Thyroid gland (tissue), 4 donors: ENCODE measurements at regions of chr11 and their contacts with region 1.

Region 1: DNA sequence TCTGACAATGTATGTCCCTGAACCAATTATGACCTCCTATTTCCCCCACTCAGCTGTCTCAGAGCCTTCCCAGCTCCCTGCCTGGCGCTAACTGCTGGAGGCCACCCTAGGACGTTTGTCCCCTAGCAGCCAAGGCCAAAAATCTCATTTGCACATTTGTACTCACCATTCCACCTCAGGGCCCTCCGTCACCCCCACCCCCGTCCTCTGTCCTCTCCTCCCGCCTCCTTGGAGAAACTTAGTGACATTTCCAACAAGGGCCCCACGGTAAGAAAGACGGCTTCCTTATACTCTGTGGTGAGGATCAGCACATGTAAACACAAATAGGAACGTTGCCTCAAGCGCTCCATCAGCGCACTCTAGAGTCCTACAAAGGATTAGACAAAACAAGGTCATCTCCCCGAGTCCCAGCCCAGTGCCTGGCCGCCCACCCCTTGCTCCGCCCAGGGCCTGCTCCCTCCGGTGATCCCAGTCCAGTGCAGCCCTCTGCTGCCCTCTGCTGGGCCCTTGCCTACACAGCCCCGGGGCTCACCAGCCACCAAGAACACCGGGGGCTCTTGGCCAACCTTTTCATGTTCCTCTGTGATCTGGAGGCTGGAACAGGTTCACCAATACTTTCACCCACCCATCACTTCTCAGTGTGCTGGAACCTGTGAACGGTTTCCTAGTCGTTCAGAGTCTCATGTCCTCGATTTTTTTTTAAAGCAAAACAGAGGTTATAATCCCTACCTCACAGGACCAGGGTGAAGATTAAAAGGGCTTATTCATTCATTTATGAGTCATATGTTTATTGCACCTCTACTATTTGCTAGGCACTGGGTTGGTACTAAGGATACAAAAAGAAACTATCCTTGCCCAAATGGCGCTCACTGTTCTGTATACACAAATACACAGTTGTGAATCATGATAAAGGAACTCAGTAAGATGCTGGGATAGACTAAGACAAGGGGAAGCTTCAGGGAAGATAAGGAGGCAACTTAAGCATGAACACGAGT is 15.3 kb upstream of the CTR9 start:
- DNase-seq: peak; percentile 93 to 94
- H3K4me3 ChIP-seq: no peak overlapping the region
- H3K27ac ChIP-seq: no peak overlapping the region
- H3K4me1 ChIP-seq: peaks cover 0 to 2% of the 10 kb centered on the region in 2 donors
- H3K27me3 ChIP-seq: no peaks in the 10 kb centered on the region
- CTCF ChIP-seq: peak; percentile 95 to 99 (median 98)
- POLR2A ChIP-seq: no peak

Region 2: DNA sequence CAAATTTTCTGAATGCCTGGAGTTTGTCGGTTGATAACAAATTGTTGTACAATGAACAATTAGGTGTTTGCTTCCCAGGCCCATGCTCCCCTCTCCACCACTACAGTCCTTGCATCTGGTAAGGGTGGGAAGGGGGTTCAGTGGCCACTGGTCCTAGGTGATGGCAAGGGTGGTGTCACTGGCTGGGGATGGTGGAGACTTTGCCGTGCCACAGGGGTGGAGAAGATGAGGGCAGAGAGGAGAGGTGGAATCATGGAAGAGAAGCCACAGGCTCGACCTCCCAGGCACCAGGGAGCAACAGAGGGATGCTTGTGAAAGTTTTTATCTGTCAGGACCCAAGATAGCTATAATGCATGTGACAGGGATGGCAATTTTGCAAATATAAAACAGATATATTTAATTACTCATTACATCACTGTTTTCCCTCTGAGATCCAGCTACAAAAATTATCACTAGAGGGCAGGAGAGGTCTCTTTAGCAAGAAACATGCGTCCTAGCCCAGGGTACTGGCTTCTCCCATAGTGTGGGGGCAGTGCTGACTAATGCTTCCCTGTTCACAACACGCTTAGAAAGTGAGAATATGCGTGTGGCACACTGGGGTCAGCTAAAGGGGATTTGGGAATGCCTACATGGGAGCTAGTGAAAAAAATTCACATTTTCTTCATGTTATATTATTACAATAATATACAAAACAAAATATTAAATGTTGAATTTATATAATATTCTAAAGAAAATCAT is 329.8 kb before region 1 on chr11:
- intact Hi-C with region 1: loop called (anchors 5 kb)
- DNase-seq: peak; percentile 72 to 76
- H3K4me3 ChIP-seq: no peak overlapping the region
- H3K27ac ChIP-seq: no peak overlapping the region
- H3K4me1 ChIP-seq: no peaks in the 10 kb centered on the region
- H3K27me3 ChIP-seq: no peaks in the 10 kb centered on the region
- CTCF ChIP-seq: peak in 5 of 6 experiments; percentile 42 to 77 (median 73)
- POLR2A ChIP-seq: no peak

Region 3: DNA sequence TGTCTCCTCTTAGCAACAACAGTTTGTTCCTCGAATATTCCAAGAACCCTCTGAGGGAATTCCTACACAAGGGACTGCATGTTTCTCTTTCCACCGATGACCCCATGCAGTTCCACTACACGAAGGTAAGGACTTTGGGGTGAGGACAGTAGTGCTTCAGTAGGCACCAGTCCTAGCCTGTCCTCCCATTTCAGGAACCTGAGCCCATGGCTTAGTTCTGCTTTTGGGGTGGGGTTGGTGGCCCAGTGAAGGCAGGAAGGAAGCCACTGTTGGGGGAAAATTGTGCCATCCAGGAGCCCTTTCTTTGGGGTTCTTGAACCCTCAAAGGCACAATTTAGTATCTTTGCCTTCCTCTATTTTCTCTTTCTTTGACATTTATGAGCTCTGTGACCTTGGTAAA is 233.0 kb before region 1 on chr11:
- intact Hi-C with region 1: loop called (anchors 10 kb)
- DNase-seq: no peak
- H3K4me3 ChIP-seq: no peak overlapping the region
- H3K27ac ChIP-seq: no peak overlapping the region
- H3K4me1 ChIP-seq: no peaks in the 10 kb centered on the region
- H3K27me3 ChIP-seq: no peaks in the 10 kb centered on the region
- CTCF ChIP-seq: no peak
- POLR2A ChIP-seq: no peak

Region 4: GRCh38 chr11:10628508-10629236 is 107.1 kb before region 1 on chr11:
- intact Hi-C with region 1: loop called (anchors 5 kb)
- DNase-seq: no peak
- H3K4me3 ChIP-seq: no peak overlapping the region
- H3K27ac ChIP-seq: no peak overlapping the region
- H3K4me1 ChIP-seq: peaks cover 0 to 16% of the 10 kb centered on the region in 2 donors
- H3K27me3 ChIP-seq: no peaks in the 10 kb centered on the region
- CTCF ChIP-seq: no peak
- POLR2A ChIP-seq: no peak